Heart right ventricle (tissue), 16 donors: ENCODE measurements at regions of chr6 and their contacts with region 1.

Region 1: DNA sequence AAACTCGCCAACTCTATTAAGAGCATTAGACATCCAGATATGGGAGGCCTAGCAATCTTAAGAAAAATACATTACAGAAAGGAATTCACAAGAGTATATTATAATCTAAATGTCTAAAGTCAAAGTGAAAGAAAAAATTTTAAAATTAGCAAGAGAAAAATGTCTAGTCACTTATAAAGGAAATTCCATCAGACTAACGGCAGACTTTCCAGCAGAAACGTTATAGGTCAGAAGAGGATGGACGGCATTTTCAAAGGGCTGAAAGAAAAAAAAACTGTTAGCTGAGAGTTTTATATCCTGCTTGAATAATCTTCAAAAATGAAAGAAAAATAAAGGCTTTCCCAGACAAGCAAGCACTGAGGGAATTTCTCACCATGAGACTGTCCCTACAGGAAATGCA is 269.0 kb downstream of the HDGFL1 start:
- DNase-seq: no peak
- ATAC-seq: no peak
- H3K4me3 ChIP-seq: no peak overlapping the region
- H3K27ac ChIP-seq: no peak overlapping the region
- H3K4me1 ChIP-seq: no peaks in the 10 kb centered on the region
- H3K27me3 ChIP-seq: no peaks in the 10 kb centered on the region
- CTCF ChIP-seq: no peak

Region 2: GRCh38 chr6:22929311-22929985 is 91.1 kb after region 1 on chr6:
- intact Hi-C with region 1: loop called in 1 of 10 experiments (anchors 10 kb)
- DNase-seq: peak in 1 of 2 donors; percentile 8
- ATAC-seq: peak in 6 of 8 donors; percentile 45 to 82 (median 66)
- H3K4me3 ChIP-seq: no peak overlapping the region
- H3K27ac ChIP-seq: peak overlapping the region; percentile 3 to 69 (median 47)
- H3K4me1 ChIP-seq: peaks cover 0 to 46% (median 39%) of the 10 kb centered on the region in 9 donors
- H3K27me3 ChIP-seq: no peaks in the 10 kb centered on the region
- CTCF ChIP-seq: no peak

Region 3: GRCh38 chr6:23091795-23092194 is 253.4 kb after region 1 on chr6:
- intact Hi-C with region 1: no loop called
- DNase-seq: no peak
- ATAC-seq: no peak
- H3K4me3 ChIP-seq: no peak overlapping the region
- H3K27ac ChIP-seq: no peak overlapping the region
- H3K4me1 ChIP-seq: no peaks in the 10 kb centered on the region
- H3K27me3 ChIP-seq: no peaks in the 10 kb centered on the region
- CTCF ChIP-seq: no peak